ENCODE measurements at regions of chr6 and their contacts with region 1.

Region 1: DNA sequence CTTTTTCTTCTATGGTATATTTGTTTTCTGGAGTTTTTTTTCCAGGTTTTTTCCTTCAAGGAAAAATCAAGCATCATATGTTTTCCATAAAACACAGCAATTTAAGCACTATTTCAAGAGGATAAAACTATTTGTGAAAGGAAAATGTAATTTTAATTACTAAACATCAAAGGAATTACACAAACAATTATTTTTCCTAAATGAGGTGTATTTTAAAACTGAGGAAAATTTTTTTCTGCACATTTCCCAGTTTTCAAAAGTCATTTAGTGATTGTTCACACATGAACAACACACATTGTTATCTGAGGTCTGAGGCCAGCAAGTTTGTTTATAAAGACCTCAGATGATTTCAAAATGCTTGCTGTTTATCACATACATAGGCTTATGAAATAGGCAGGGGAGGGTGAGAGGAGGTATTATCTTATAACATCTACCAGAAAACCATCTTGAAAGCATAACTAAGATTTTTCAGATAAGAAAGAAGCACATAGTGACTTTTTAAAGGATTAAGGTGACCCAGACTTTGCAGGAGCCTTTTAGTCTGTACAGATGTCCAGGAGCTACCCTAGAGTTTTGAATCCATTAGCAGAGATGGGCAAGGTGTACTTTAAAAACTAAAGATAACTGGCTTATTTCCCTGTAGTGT is 381.6 kb downstream of the GJA1 start:
- DNase-seq: no peak
- H3K4me3 ChIP-seq: no peak overlapping the region
- H3K27ac ChIP-seq: no peak overlapping the region
- H3K4me1 ChIP-seq: no peaks in the 10 kb centered on the region
- H3K27me3 ChIP-seq: no peaks in the 10 kb centered on the region
- CTCF ChIP-seq: no peak
- POLR2A ChIP-seq: no peak

Region 2: DNA sequence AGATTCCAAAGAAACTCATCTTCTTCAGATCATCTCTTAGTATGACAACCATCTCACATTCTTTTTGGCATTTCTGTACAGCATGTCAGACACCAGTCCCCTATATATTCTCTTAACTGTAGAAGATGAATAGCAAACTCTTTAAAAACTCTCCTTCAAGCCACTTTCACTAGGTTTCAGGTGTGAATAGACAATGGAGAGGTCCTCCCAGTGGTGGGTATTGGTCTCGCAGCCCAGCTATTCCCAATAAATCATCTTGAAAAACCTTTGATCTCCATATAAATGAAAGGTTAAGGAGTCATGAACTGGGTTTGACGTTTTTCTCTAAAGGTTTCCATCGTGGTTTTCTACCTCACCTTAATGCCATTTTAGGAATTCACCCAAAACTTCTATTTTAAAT is 201.5 kb before region 1 on chr6:
- CTCF ChIA-PET with region 1: no interaction called
- POLR2A ChIA-PET with region 1: no interaction called
- dilution Hi-C with region 1: no loop called
- intact Hi-C with region 1: no loop called
- DNase-seq: peak; percentile 21
- H3K4me3 ChIP-seq: no peak overlapping the region
- H3K27ac ChIP-seq: no peak overlapping the region
- H3K4me1 ChIP-seq: no peaks in the 10 kb centered on the region
- H3K27me3 ChIP-seq: no peaks in the 10 kb centered on the region
- CTCF ChIP-seq: peak; percentile 4 to 15
- POLR2A ChIP-seq: no peak

Region 3: GRCh38 chr6:121759370-121759769 is 57.7 kb before region 1 on chr6:
- CTCF ChIA-PET with region 1: no interaction called
- POLR2A ChIA-PET with region 1: no interaction called
- dilution Hi-C with region 1: no loop called
- intact Hi-C with region 1: loop called (anchors 5 kb)
- DNase-seq: peak; percentile 2
- H3K4me3 ChIP-seq: no peak overlapping the region
- H3K27ac ChIP-seq: no peak overlapping the region
- H3K4me1 ChIP-seq: no peaks in the 10 kb centered on the region
- H3K27me3 ChIP-seq: no peaks in the 10 kb centered on the region
- CTCF ChIP-seq: no peak
- POLR2A ChIP-seq: no peak

Region 4: DNA sequence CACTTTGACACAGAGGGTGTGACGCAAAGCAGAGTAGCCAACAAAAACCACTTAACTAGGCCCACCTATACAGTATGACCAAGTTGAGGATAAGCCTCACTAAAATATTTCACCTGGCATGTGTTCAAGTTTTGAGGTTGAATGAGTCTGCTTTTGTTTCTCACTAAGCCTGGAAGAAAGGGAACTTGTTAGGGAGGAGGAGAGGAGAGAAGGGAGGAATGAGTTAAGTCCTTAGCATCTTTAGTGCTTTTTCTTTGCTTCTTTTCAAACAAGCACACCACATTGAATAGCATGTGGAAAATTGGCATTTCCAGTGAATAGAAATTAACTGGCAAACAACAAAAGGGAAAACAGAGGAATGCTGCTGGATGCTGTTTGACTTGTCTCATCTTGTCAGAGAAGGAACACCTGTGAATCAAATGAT is 80.3 kb after region 1 on chr6:
- CTCF ChIA-PET with region 1: no interaction called
- POLR2A ChIA-PET with region 1: no interaction called
- dilution Hi-C with region 1: no loop called
- intact Hi-C with region 1: no loop called
- DNase-seq: peak; percentile 4
- H3K4me3 ChIP-seq: no peak overlapping the region
- H3K27ac ChIP-seq: no peak overlapping the region
- H3K4me1 ChIP-seq: no peaks in the 10 kb centered on the region
- H3K27me3 ChIP-seq: no peaks in the 10 kb centered on the region
- CTCF ChIP-seq: no peak
- POLR2A ChIP-seq: no peak